ENCODE measurements at regions of chr20 and their contacts with region 1.

Region 1: GRCh38 chr20:13221673-13222318 is 722 bp downstream of the ISM1 start:
- DNase-seq: peak; percentile 65
- H3K4me3 Mint-ChIP-seq: peak overlapping the region; percentile 73
- H3K27ac Mint-ChIP-seq: no peak overlapping the region
- H3K4me1 Mint-ChIP-seq: peaks cover 10% of the 10 kb centered on the region
- H3K27me3 Mint-ChIP-seq: peaks cover 27% of the 10 kb centered on the region

Region 2: DNA sequence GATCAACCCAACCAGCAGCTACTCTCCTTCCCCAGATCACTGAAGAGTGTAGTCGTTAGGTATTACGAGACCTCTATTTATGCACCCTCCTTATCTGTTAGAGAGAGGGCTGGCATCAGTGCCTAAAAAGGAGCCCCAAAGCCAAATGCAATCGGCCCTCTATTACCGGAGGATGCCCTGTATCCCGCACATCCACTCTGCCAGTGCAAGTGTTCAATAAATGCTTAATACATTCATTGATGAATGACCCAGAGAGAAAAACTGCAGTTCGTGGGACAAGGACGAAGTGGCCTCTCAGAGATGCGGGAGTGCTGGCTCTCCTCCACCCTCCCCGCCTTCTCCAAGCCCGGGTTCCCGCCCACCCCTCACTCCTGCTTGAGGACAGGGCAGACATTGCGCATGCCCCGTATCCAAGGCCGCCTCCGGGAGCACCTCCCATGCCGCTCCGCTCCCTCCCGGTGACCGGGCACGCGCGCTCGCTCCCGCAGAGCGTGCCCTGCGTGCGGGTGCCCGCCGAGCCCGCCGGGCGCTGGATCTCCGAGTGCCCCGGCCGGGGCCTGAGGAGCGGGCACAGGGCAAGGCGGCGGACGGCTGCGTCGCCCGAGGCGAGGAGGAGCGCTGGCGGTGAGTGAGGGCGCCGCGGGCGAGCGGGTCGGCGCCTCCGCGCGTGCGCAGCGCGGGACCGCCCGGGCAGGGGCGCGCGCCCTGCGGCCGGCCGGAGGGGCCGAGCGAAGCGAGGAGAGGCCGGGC is 1331.3 kb before region 1 on chr20:
- CTCF ChIA-PET with region 1: no interaction called
- intact Hi-C with region 1: loop called (anchors 10 kb)
- DNase-seq: peak; percentile 67
- H3K4me3 Mint-ChIP-seq: peak overlapping the region; percentile 73
- H3K27ac Mint-ChIP-seq: peak overlapping the region; percentile 50
- H3K4me1 Mint-ChIP-seq: peaks cover 21% of the 10 kb centered on the region
- H3K27me3 Mint-ChIP-seq: peaks cover 25% of the 10 kb centered on the region

Region 3: GRCh38 chr20:12902992-12903391 is 318.8 kb before region 1 on chr20:
- CTCF ChIA-PET with region 1: no interaction called
- intact Hi-C with region 1: no loop called
- DNase-seq: no peak
- H3K4me3 Mint-ChIP-seq: no peak overlapping the region
- H3K27ac Mint-ChIP-seq: no peak overlapping the region
- H3K4me1 Mint-ChIP-seq: no peaks in the 10 kb centered on the region
- H3K27me3 Mint-ChIP-seq: peaks cover 2% of the 10 kb centered on the region

Region 4: DNA sequence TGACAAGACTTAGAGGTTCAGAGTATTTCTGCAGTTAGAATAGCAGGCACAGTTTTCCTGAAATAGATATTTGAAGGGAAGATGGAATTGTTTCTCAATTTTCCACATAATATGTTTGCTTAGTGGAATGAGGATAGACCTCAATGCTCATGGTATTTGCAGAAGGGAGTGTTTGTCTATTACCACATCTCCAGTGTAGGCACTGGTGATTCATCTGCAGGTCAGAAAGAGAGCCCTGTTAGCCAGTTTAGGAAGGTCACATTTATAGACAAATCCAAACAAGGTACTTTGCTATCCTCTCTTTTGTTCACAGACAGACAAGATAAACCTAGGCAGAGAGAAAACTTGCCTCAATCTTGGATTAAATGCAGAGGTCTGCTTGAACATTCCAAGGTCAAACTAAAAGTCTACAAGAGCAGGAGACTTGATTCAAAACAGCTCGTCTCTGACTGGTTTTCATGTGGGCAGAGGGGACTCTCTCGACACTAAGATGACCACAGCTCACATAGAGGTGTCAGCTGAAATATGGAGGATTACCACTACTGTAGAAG is 22.1 kb after region 1 on chr20:
- CTCF ChIA-PET with region 1: no interaction called
- intact Hi-C with region 1: loop called (anchors 1 kb)
- DNase-seq: no peak
- H3K4me3 Mint-ChIP-seq: no peak overlapping the region
- H3K27ac Mint-ChIP-seq: no peak overlapping the region
- H3K4me1 Mint-ChIP-seq: peaks cover 38% of the 10 kb centered on the region
- H3K27me3 Mint-ChIP-seq: no peaks in the 10 kb centered on the region

Region 5: GRCh38 chr20:13638496-13639222 is 416.9 kb after region 1 on chr20 and contains the start of gene TASP1:
- CTCF ChIA-PET with region 1: no interaction called
- intact Hi-C with region 1: loop called (anchors 2 kb)
- DNase-seq: peak; percentile 97
- H3K4me3 Mint-ChIP-seq: peak within 1 kb of the TSS; percentile 91
- H3K27ac Mint-ChIP-seq: peak within 1 kb of the TSS; percentile 76
- H3K4me1 Mint-ChIP-seq: peaks cover 15% of the 10 kb centered on the region
- H3K27me3 Mint-ChIP-seq: peaks cover 1% of the 10 kb centered on the region
- total RNA-seq, gene TASP1: 6.3 to 6.7 TPM